CD4-positive, alpha-beta memory T cell (primary cell): ENCODE measurements at regions of chr1 and their contacts with region 1.

Region 1: DNA sequence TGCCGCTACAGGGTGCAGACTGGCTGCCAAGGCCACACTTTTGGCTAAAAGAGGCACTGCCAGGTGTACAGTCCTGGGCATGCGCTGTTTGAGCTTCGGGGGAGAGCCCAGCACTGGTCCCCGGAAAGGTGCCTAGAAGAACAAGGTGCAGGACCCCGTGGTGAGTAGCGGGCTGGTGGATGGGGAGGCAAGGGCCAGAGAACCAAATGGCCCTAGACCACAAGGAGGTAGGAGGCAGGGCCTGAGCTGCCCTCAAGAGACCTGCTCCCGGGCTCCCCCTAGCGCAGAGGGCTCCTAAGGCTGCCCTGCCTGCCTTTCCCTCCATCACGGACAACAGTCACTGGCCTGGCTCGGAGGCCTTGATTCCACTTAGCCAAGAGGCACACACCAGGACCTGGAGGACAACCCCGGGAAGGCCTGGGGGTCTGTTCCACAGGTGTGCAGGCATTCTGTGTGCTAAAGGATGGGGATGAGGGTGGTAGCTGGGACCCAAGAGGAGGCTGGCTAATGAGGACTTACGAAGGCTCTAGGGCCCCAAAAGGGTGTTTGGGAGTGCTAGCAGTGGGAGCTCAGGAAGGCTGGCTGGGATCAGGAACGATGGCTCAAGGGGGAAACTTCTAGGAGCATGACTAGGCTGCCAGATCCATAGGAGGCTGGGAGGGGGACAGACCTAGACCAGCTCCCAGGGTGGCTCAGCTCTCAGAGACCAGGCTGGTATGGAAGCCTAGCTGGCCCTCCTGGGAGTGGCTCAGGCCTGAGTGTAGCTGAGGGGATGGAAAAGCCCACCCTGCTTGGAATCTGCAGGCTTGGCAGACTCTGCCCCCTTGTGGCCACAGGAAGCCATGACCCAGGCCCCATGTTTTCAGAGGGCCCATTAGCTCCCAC is 742 bp downstream of the ARTN start:
- DNase-seq: peak in 4 of 5 donors; percentile 23 to 35 (median 32)
- H3K4me3 ChIP-seq: no peak overlapping the region
- H3K4me3 Mint-ChIP-seq: peak overlapping the region in 4 of 8 donors; percentile 0 to 56 (median 34)
- H3K27ac ChIP-seq: no peak overlapping the region
- H3K27ac Mint-ChIP-seq: peak overlapping the region in 2 of 7 donors; percentile 43 to 56
- H3K4me1 ChIP-seq: peaks cover 8% of the 10 kb centered on the region
- H3K4me1 Mint-ChIP-seq: peaks cover 3 to 25% (median 4%) of the 10 kb centered on the region in 4 donors
- H3K27me3 ChIP-seq: peaks cover 23% of the 10 kb centered on the region
- H3K27me3 Mint-ChIP-seq: peaks cover 16 to 21% of the 10 kb centered on the region in 2 donors

Region 2: DNA sequence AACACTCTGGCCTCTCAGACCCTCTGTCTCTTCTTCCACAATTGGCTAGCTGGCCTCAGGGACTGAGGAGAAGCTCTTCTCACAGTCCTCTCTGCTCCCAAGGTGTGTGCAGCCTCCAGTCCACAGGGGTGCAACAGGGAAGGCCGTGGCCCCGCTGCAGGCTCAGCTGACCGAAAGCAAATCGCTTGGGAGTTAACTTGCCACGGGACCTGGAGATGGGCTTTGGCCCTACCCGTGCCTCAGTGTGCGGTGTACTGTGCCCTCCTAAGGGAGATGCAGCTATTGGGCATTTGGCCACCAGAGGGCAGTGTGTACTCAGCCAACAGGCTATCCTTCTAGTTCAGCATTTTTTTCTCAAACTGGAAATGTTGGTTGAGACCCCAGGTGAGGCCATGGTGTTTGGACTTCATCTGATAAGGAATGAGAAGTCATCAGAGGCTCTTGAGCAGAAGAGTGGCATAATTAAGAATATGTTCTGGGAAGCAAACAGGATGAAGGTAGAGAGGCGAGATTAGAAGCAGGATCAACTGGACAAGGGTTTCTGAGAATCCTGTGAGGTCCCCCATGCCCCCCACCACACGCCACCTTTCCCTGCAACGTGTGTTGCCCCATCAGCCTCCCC is 707.1 kb before region 1 on chr1:
- CTCF ChIA-PET with region 1: interaction called, 8 read pairs
- POLR2A ChIA-PET with region 1: no interaction called
- intact Hi-C with region 1: loop called (anchors 5 kb)
- DNase-seq: peak; percentile 68 to 75 (median 72)
- H3K4me3 ChIP-seq: no peak overlapping the region
- H3K4me3 Mint-ChIP-seq: no peak overlapping the region
- H3K27ac ChIP-seq: no peak overlapping the region
- H3K27ac Mint-ChIP-seq: peak overlapping the region in 2 of 7 donors; percentile 18 to 53
- H3K4me1 ChIP-seq: no peaks in the 10 kb centered on the region
- H3K4me1 Mint-ChIP-seq: no peaks in the 10 kb centered on the region
- H3K27me3 ChIP-seq: no peaks in the 10 kb centered on the region
- H3K27me3 Mint-ChIP-seq: peaks cover 0 to 9% of the 10 kb centered on the region in 2 donors

Region 3: DNA sequence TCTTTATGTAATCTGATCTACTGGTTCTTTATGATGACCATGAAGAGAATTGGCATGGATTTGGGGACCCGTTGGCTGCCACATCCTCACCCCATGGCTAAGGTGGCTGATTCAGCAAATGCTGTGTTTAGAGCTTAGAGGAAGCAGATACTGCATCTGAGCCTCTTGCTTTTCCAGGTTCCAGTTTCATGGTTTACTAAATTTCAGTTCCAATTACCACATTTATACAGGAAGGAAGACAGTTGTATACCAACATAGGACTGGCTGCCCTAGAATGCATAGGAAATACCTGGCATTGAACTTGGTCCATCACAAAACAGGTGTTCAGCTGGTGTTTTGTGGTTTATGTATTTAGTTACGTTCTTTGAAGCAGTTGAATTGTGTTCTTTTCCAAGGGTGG is 119.9 kb before region 1 on chr1:
- CTCF ChIA-PET with region 1: no interaction called
- POLR2A ChIA-PET with region 1: no interaction called
- intact Hi-C with region 1: no loop called
- DNase-seq: no peak
- H3K4me3 ChIP-seq: no peak overlapping the region
- H3K4me3 Mint-ChIP-seq: no peak overlapping the region
- H3K27ac ChIP-seq: no peak overlapping the region
- H3K27ac Mint-ChIP-seq: no peak overlapping the region
- H3K4me1 ChIP-seq: no peaks in the 10 kb centered on the region
- H3K4me1 Mint-ChIP-seq: no peaks in the 10 kb centered on the region
- H3K27me3 ChIP-seq: no peaks in the 10 kb centered on the region
- H3K27me3 Mint-ChIP-seq: no peaks in the 10 kb centered on the region

Region 4: GRCh38 chr1:43952731-43953346 is 18.5 kb after region 1 on chr1:
- CTCF ChIA-PET with region 1: interaction called, 83 read pairs
- POLR2A ChIA-PET with region 1: no interaction called
- intact Hi-C with region 1: no loop called
- DNase-seq: no peak
- H3K4me3 ChIP-seq: no peak overlapping the region
- H3K4me3 Mint-ChIP-seq: no peak overlapping the region
- H3K27ac ChIP-seq: no peak overlapping the region
- H3K27ac Mint-ChIP-seq: no peak overlapping the region
- H3K4me1 ChIP-seq: peaks cover 8% of the 10 kb centered on the region
- H3K4me1 Mint-ChIP-seq: peaks cover 15 to 39% (median 22%) of the 10 kb centered on the region in 4 donors
- H3K27me3 ChIP-seq: no peaks in the 10 kb centered on the region
- H3K27me3 Mint-ChIP-seq: no peaks in the 10 kb centered on the region

Region 5: GRCh38 chr1:44049839-44050238 is 115.5 kb after region 1 on chr1:
- CTCF ChIA-PET with region 1: interaction called, 13 read pairs
- POLR2A ChIA-PET with region 1: no interaction called
- intact Hi-C with region 1: no loop called
- DNase-seq: no peak
- H3K4me3 ChIP-seq: no peak overlapping the region
- H3K4me3 Mint-ChIP-seq: no peak overlapping the region
- H3K27ac ChIP-seq: no peak overlapping the region
- H3K27ac Mint-ChIP-seq: no peak overlapping the region
- H3K4me1 ChIP-seq: no peaks in the 10 kb centered on the region
- H3K4me1 Mint-ChIP-seq: peaks cover 0 to 5% (median 3%) of the 10 kb centered on the region in 4 donors
- H3K27me3 ChIP-seq: no peaks in the 10 kb centered on the region
- H3K27me3 Mint-ChIP-seq: peaks cover 12 to 13% of the 10 kb centered on the region in 2 donors

Region 6: GRCh38 chr1:44316231-44316759 is 382.0 kb after region 1 on chr1:
- CTCF ChIA-PET with region 1: no interaction called
- POLR2A ChIA-PET with region 1: no interaction called
- intact Hi-C with region 1: no loop called
- DNase-seq: no peak
- H3K4me3 ChIP-seq: no peak overlapping the region
- H3K4me3 Mint-ChIP-seq: no peak overlapping the region
- H3K27ac ChIP-seq: no peak overlapping the region
- H3K27ac Mint-ChIP-seq: no peak overlapping the region
- H3K4me1 ChIP-seq: no peaks in the 10 kb centered on the region
- H3K4me1 Mint-ChIP-seq: peaks cover 0 to 7% (median 3%) of the 10 kb centered on the region in 4 donors
- H3K27me3 ChIP-seq: no peaks in the 10 kb centered on the region
- H3K27me3 Mint-ChIP-seq: no peaks in the 10 kb centered on the region